Head of caudate nucleus (tissue), 42 donors: ENCODE measurements at regions of chr18 and their contacts with region 1.

Region 1: GRCh38 chr18:3771121-3771971 is 321.4 kb downstream of the TGIF1 start:
- DNase-seq: peak; percentile 74 to 95 (median 88)

Region 2: GRCh38 chr18:3340015-3340681 is 431.2 kb before region 1 on chr18:
- intact Hi-C with region 1: no loop called
- DNase-seq: no peak

Region 3: DNA sequence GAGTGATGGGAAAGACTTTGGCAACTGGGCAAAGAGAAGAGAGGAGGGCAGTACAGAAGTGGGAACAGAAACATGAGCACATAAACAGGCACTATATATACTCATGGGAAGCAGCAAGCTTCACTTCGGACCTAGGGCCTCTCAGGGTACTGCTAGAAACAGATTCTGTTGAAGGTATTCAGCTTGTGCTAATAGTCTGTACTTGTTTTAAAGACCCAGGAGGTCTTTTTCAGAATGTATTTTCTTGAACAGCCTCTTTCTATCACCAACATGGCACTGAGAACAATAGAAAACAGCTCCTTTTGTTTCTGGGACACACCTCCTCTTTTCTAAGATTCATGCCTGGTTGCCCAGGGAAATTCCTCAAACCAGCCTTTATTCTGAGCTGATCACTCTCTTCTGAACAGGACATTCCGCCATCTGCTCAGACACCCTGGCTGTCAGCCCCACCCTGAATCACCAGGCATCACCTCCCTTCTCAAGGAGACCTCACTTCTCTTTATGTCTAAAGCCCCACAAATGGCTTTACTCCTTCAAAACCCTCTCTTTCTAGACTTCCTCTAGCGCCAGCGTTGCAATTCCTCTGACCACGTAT is 68.2 kb after region 1 on chr18:
- intact Hi-C with region 1: no loop called
- DNase-seq: no peak

Region 4: DNA sequence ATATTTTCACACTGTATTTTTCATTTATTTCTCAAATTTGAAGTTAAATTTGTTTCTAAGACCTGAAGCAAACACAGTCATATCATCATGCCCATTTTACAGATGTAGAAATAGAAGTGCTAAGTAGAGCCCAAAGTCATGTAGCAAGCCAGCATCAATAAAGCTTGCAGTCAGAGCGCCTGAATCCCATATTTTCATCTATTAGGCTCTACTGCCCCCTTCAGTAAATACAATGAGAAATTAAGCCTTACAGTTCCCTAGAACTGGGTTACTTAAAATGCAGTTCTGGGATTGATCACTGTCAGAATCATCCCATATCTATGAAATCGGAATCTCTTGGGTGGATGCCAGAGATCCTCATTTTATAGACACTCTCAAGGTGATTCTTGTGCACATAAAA is 98.5 kb after region 1 on chr18:
- intact Hi-C with region 1: loop called (anchors 10 kb)
- DNase-seq: no peak

Region 5: GRCh38 chr18:3995476-3996102 is 224.2 kb after region 1 on chr18:
- intact Hi-C with region 1: loop called (anchors 5 kb)
- DNase-seq: peak in 38 of 42 donors; percentile 17 to 82 (median 56)